ENCODE measurements at regions of chr5 and their contacts with region 1.

Region 1: DNA sequence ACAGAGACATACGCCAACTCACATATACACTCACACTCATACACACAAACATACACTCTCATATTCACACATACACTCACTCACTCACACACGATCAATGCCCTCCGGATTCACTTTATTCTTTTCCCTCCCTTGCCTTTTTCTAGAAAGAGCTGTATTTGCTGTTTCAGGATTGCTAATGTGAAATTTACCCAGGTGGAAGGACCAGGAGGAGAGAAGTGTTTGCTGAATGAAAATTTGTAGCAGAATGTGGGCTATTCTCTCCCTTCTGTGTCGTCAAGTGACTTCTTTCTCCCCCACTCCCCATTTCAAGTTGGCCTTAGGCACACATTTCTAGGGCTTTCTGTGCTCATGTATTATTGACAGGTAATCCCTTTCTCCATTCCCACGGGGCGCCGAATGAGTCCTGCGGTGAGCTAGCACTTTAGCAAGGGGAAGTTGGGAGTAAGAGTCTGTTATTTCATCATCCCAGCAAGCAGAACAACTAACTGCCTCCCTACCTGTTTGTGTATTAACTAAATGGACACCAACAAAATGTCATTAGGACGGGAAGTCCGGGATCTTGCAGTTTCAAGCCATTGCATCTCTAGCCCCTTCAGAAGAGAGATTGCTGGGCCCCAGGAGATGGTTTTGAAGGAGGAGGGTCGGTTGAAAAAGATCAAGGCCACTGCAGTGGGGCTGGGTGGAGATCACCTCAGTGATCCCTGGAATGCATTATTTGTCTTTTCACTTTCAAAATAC is 97.1 kb upstream of the TAF11L2 start:
- DNase-seq: no peak

Region 2: GRCh38 chr5:17228821-17229291 is 172.0 kb before region 1 on chr5:
- intact Hi-C with region 1: loop called (anchors 10 kb)
- DNase-seq: no peak

Region 3: GRCh38 chr5:18653216-18653752 is 1252.4 kb after region 1 on chr5:
- intact Hi-C with region 1: no loop called
- DNase-seq: no peak